ENCODE measurements at regions of chr12 and their contacts with region 1.

Region 1: GRCh38 chr12:101963697-101964096 is 86.3 kb downstream of the DRAM1 start:
- DNase-seq: no peak
- ATAC-seq: no peak

Region 2: GRCh38 chr12:101945369-101946231 is 18.1 kb before region 1 on chr12:
- intact Hi-C with region 1: no loop called
- DNase-seq: no peak
- ATAC-seq: peak; percentile 68

Region 3: GRCh38 chr12:102246016-102246415 is 282.3 kb after region 1 on chr12:
- intact Hi-C with region 1: no loop called
- DNase-seq: no peak
- ATAC-seq: no peak

Region 4: DNA sequence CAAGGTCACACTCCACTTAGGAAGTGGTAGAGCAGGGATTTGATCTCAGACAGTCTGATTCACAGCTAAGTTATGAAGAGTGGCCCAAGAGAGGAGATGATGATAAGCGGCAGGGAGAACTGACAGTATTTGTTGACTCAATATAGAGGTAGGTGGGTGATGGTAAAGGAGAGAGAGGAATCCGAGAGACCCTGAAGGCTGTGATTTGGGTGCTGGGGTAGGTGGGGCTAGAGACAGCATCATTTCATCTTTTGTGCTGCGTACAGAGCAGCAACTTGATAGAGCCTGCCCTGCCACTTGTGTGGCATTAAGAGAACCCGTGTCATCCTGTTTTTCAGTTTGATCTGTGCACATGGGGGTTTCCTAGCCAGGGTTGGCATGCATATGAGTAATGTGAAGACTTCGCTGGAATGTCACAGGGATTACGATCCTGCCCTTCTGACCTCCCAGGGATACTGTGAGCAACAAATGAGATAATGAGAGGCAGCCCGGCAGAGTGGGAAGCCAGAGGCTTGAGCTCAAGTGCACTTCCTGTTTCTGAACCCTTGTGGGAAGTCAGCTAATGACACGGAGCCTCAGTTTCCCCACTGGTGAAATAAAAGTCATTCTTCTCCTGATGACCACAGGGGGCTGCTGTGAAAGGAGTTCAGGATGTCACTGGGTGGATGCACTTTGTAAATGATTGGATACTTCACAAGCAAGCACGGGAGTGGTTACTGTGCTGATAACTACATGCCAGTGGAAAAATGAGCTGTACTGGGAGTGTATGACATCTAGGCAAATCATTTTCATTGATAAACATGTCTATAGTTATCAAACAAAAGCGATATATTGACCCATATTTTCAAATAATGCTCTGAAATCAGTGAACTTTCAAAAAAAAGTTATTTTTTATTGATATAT is 576.2 kb after region 1 on chr12:
- intact Hi-C with region 1: loop called (anchors 2 kb)
- DNase-seq: no peak
- ATAC-seq: no peak

Region 5: GRCh38 chr12:102990419-102990818 is 1026.7 kb after region 1 on chr12:
- intact Hi-C with region 1: no loop called
- DNase-seq: no peak
- ATAC-seq: no peak